Naive thymus-derived CD4-positive, alpha-beta T cell (primary cell): ENCODE measurements at regions of chr20 and their contacts with region 1.

Region 1: DNA sequence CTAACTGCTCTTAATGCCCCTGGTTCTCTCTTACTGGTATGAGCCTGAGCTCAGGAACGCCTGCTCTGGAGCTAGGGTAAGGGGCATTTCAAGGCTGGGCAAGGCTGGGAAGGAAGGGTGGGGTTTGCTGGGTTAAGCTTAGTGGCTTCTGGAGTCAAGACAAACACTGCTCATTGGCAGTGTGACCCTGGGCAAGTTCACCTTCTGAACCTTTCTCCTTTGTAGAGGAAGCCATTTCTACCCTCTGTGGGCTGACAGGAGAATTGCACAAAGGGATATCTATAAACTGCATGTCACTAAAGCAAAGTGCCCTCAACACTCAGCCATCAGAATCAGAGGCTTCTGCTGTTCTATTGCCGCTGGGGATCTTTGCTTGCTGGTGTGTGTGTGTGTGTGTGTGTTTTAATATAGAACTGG is 20.3 kb upstream of the LRRN4 start:
- DNase-seq: peak in 3 of 9 donors; percentile 27 to 34 (median 30)
- ATAC-seq: peak; percentile 41
- H3K4me3 ChIP-seq: no peak overlapping the region
- H3K4me3 Mint-ChIP-seq: no peak overlapping the region
- H3K27ac ChIP-seq: no peak overlapping the region
- H3K27ac Mint-ChIP-seq: peak overlapping the region in 2 of 9 donors; percentile 2 to 59
- H3K4me1 ChIP-seq: no peaks in the 10 kb centered on the region
- H3K4me1 Mint-ChIP-seq: peaks cover 0 to 7% (median 3%) of the 10 kb centered on the region in 7 donors
- H3K27me3 ChIP-seq: no peaks in the 10 kb centered on the region
- H3K27me3 Mint-ChIP-seq: peaks cover 0 to 2% (median 0%) of the 10 kb centered on the region in 5 donors

Region 2: DNA sequence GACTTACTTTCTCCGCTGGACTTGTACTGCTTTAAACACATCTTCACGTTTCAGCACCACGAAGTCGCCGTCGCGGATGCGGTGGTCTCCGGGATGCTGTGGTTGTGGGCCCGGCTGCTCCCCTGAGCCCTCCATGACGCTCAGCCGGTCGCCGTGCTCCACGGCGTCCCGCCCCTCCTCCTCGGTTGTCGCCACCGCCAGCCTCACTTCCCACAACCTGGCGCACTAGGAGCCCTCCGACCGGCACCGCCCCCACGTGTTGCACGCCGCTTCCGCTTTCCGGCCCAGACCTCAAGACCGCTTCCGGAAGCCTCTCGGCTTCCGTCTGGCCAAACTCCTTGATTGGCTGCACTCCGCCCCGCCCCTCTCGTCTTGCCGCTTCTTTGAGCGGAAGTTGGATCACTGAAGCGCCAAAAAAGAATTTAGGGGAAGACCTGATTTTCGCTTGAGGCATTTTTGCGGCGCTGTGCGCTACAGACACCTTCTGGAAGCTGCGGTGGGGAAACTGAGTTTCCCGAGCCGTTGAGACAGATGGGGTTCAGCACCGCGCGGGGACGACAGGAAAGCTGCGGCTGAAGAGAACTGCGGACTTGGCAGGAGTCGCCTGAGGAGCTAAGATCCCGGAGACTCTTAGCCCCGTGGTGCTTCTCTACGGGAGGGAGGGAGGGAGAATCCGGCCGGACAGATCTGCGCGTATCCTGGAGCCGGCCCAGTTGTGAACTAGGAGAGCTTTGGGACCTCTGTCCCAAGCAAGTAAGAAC is 123.7 kb before region 1 on chr20 and contains the starts of genes MCM8 and TRMT6:
- CTCF ChIA-PET with region 1: no interaction called
- POLR2A ChIA-PET with region 1: no interaction called
- intact Hi-C with region 1: loop called (anchors 1 to 10 kb)
- DNase-seq: peak; percentile 82 to 97 (median 95)
- ATAC-seq: peak; percentile 97
- H3K4me3 ChIP-seq: peak within 1 kb of the TSS; percentile 89
- H3K4me3 Mint-ChIP-seq: peak within 1 kb of the TSS; percentile 91 to 99 (median 96)
- H3K27ac ChIP-seq: peak within 1 kb of the TSS; percentile 82
- H3K27ac Mint-ChIP-seq: peak within 1 kb of the TSS; percentile 91 to 100 (median 97)
- H3K4me1 ChIP-seq: peaks cover 13 to 17% of the 10 kb centered on the region in 2 donors
- H3K4me1 Mint-ChIP-seq: peaks cover 7 to 61% (median 45%) of the 10 kb centered on the region in 7 donors
- H3K27me3 ChIP-seq: no peaks in the 10 kb centered on the region
- H3K27me3 Mint-ChIP-seq: peaks cover 0 to 4% (median 0%) of the 10 kb centered on the region in 5 donors
- total RNA-seq, gene MCM8: 2.6 to 22.7 (median 10.8) TPM
- total RNA-seq, gene TRMT6: 14.5 to 18.5 (median 17.8) TPM